ENCODE measurements at regions of chr12 and their contacts with region 1.

Region 1: DNA sequence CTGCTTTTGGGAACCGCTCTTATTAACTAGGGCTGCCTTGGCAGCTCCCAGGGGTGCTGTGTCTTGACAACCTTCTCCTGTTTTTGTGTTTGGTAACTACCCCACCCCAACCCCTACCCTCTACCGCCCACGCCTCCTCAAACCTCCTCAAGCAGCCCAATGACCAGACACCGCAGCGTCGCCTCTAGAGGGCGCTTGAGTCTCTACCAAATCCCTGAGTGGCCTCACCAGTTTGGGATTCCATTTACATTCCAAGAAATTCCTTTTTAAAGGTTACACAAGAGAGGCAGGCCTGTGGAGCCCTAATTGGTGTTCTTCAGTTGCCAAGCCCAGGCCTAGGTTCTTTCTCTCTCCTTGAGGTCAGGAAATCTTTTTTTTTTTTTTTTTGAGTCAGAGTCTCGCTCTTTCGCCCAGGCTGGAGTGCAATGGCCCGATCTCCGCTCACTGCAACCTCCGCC is 72.3 kb upstream of the USP44 start:
- DNase-seq: peak; percentile 89
- H3K4me3 ChIP-seq: no peak overlapping the region
- H3K27ac ChIP-seq: no peak overlapping the region
- H3K4me1 ChIP-seq: 0 out of 2 replicates have a peak, but pooled peaks cover 6% of the 10 kb centered on the region
- H3K27me3 ChIP-seq: no peaks in the 10 kb centered on the region

Region 2: GRCh38 chr12:95805864-95806671 is 182.5 kb after region 1 on chr12:
- in situ Hi-C with region 1: loop called (anchors 10 kb)
- DNase-seq: peak; percentile 99
- H3K4me3 ChIP-seq: peak overlapping the region; percentile 29
- H3K27ac ChIP-seq: peak overlapping the region; percentile 98
- H3K4me1 ChIP-seq: peaks cover 48% of the 10 kb centered on the region
- H3K27me3 ChIP-seq: no peaks in the 10 kb centered on the region

Region 3: DNA sequence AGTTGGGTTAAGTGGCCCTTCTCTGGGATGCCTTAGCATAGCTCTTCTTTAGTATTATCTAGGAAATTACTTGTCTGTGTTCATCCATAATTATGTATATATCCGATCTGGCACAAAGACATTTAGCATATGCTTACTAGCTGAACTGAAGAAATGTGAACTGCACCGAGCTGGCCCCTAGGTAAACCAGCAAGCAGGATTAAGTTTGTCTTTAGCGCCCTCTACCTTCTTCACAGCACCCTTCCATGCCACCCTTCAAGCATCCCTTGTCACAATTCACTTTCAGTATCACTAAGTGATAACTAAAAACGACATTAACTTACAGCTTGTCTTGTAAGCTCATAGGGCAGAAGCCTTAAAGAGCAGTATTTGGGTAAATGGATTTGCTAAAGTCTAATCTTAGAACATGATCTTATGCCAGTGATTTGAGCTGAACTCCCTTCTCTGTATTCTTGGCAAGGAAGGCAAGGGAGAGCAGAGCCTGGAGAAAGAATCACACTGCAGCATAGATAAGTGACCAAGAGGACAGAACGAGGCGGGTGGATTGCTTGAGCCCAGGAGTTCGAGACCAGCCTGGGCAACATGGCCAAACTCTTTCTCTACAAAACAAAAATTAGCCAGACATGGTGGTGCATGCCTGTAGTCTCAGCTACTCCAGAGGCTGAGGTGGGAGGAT is 375.1 kb after region 1 on chr12:
- in situ Hi-C with region 1: loop called (anchors 25 kb)
- DNase-seq: peak; percentile 73
- H3K4me3 ChIP-seq: no peak overlapping the region
- H3K27ac ChIP-seq: no peak overlapping the region
- H3K4me1 ChIP-seq: no peaks in the 10 kb centered on the region
- H3K27me3 ChIP-seq: no peaks in the 10 kb centered on the region

Region 4: GRCh38 chr12:96083020-96083719 is 459.6 kb after region 1 on chr12:
- in situ Hi-C with region 1: no loop called
- DNase-seq: no peak
- H3K4me3 ChIP-seq: no peak overlapping the region
- H3K27ac ChIP-seq: no peak overlapping the region
- H3K4me1 ChIP-seq: no peaks in the 10 kb centered on the region
- H3K27me3 ChIP-seq: no peaks in the 10 kb centered on the region